HEK293 (cell line): ENCODE measurements at regions of chr1 and their contacts with region 1.

Region 1: DNA sequence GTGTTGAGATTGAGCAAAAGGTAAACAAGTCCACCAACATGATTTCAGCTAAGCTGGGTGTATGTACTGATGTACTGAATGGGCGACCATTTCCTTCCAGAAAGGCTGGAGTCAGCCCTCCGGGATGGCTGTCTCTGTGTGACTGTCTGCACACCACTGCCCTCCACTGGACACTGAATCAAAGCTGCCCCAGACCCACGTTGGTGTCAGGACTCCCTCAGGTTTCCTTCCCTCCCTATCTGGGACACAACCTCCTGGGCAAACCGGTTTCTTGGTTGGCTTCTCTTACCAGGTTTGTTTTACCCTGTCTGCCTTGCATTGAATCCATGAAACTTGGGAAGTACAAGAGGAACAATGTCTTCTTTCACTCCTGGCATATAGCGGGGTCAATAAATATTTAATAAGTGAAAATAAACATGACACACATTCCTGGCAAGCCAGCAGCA is 5.3 kb upstream of the SRP9 start:
- H3K4me3 ChIP-seq: no peak overlapping the region
- H3K27ac ChIP-seq: no peak overlapping the region
- H3K4me1 ChIP-seq: peaks cover 11% of the 10 kb centered on the region
- CTCF ChIP-seq: peak; percentile 97

Region 2: DNA sequence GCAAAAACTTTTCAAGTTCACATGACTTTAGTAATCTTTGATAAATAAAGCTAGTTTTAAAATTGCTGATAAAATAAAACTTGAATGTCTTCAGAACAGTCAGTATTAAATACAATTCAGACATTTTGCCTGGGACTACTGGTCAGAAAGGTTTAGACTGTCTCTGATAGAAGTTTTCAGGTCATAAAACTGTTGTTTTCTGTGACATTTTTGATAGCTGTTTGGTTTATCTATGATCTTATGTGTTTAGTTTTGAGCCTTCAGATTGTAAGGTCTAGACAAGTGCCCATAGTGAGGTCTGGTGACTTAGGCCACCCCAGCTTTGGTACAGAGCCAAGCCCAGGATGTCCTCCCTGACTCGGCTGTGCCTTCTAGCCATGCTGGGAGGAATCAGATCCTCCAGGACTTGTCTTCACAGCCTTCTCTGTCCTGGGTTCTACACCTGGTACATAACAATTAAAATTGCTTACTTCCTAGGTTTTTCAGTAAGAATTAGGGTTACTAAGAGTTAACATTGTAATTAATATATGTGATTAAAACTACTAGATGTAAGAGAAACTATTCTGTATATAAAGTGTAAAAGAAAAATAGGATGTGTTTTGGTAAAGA is 858.0 kb before region 1 on chr1:
- CTCF ChIA-PET with region 1: no interaction called
- POLR2A ChIA-PET with region 1: no interaction called
- H3K4me3 ChIP-seq: no peak overlapping the region
- H3K27ac ChIP-seq: no peak overlapping the region
- H3K4me1 ChIP-seq: no peaks in the 10 kb centered on the region
- CTCF ChIP-seq: no peak

Region 3: DNA sequence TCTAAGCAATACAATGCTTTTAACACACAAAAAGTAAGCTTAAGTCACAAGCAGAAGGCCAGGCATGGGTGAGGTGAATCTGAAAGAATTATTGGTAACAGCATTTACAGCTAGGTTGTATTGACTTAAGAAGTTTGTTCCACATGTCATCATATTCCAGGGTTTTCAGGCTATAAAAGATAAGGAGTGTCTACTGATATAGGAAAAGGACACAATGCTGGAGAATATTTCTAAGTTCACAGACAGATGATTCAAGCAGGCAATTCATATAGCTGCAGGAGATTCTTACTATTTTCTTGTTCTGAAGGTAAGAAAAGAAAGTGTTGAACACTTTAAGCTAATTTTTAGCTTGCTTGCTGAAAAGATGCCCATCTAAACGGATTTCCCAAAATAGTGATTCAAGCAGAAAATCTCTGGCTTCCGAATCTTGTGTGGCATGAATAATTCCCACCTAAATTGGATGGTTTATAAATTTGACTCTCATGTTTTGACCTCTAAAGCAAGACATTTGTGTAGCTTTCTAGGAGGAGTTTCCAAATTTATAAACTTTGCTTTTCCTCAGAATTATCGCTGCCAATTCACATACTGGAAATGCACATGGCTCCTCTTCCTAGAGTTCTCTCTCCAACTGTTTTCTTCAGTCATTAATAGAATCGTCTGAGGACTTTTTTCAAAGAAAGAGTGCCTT is 248.9 kb before region 1 on chr1:
- CTCF ChIA-PET with region 1: interaction called, 10 read pairs
- POLR2A ChIA-PET with region 1: no interaction called
- H3K4me3 ChIP-seq: no peak overlapping the region
- H3K27ac ChIP-seq: no peak overlapping the region
- H3K4me1 ChIP-seq: peaks cover 13% of the 10 kb centered on the region; the same call in 1 of the 2 replicates
- CTCF ChIP-seq: no peak

Region 4: GRCh38 chr1:225567590-225568194 is 204.7 kb before region 1 on chr1:
- CTCF ChIA-PET with region 1: interaction called, 12 read pairs
- POLR2A ChIA-PET with region 1: no interaction called
- H3K4me3 ChIP-seq: no peak overlapping the region
- H3K27ac ChIP-seq: no peak overlapping the region
- H3K4me1 ChIP-seq: peaks cover 15% of the 10 kb centered on the region
- CTCF ChIP-seq: no peak

Region 5: DNA sequence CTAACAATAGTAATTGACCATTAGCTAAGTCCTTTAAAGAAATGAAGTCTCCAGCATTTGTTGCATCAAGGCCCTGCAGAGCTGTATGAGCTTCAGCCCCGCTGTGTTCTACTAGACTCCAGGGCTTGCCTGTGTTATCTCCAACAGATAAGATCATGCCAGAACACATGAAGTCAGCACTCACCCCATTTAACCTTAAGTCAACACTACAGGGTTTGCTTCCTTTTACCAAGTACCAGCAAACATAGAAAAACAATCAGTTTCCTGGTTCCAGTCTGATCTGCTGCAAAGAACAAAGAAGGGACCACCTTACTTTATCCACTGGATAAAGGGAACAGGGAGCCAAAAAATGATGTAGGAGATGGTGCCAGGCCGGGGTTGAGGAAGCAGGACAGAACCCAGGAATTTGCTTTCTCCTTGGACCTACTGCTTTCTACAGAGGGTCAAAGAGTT is 78.2 kb before region 1 on chr1:
- CTCF ChIA-PET with region 1: interaction called, 17 read pairs
- POLR2A ChIA-PET with region 1: interaction called, 9 read pairs
- H3K4me3 ChIP-seq: no peak overlapping the region
- H3K27ac ChIP-seq: peak overlapping the region; percentile 42
- H3K4me1 ChIP-seq: peaks cover 17% of the 10 kb centered on the region
- CTCF ChIP-seq: no peak

Region 6: DNA sequence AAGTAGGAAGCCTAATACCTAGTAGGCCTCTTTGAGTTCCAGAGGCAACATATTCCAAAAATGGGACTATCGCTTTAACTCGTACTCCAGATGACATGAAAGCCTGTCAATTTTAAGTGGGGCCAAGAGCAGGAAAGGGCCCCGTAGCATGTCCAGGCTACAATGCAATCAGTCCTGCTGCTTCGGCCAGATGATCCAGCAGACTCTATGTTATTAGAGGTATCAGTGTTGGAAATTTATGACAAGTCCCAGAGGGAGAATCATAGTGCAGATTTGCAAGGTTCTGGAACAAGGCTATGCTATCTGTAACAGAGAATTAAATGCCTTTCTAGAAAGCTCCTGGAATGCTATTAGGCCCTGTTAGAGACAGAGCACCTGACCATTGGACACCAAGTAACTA is 51.4 kb before region 1 on chr1:
- CTCF ChIA-PET with region 1: interaction called, 14 read pairs
- POLR2A ChIA-PET with region 1: interaction called, 5 read pairs
- H3K4me3 ChIP-seq: no peak overlapping the region
- H3K27ac ChIP-seq: no peak overlapping the region
- H3K4me1 ChIP-seq: no peaks in the 10 kb centered on the region
- CTCF ChIP-seq: no peak

Region 7: DNA sequence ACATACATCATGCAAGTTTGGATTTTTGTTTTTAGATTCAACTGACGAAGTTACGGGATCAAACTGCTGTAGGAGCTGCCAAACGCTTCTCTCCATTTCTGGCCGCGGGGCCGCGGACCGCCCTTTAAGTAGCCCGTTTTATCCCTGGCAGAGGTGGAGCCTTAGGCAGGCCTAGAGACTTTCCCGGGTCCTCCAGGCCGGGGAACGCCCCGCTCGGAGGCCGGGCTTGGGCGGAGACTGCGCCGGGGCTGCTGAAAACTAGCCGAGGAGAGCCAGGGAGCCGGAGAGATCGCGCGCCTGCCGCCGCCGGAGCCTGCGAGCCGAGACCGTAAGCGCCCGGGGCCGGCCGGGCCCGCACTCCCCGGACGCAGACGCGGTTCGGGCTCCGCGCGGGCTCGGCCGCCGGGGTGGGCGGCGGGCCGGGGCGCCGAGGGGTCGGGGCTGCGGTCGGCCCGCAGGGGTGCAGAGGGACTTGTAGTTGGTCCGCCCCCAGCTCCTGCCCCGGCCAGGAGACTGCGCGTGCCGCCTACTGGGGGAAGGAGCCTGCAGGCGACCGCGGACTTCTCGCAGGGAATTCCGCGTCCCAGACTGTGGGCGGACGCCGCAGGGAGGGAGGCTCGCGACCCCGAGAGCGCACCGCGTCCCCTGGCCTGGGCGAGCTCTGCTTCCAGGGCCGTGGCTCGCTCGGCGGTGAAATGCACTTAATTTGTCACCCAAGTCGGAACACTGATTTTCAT is 37.7 kb after region 1 on chr1 and contains the start of gene EPHX1:
- CTCF ChIA-PET with region 1: interaction called, 22 read pairs
- POLR2A ChIA-PET with region 1: interaction called, 46 read pairs
- H3K4me3 ChIP-seq: peak within 1 kb of the TSS; percentile 64
- H3K27ac ChIP-seq: peak within 1 kb of the TSS; percentile 61
- H3K4me1 ChIP-seq: peaks cover 20% of the 10 kb centered on the region
- CTCF ChIP-seq: peak; percentile 88

Region 8: DNA sequence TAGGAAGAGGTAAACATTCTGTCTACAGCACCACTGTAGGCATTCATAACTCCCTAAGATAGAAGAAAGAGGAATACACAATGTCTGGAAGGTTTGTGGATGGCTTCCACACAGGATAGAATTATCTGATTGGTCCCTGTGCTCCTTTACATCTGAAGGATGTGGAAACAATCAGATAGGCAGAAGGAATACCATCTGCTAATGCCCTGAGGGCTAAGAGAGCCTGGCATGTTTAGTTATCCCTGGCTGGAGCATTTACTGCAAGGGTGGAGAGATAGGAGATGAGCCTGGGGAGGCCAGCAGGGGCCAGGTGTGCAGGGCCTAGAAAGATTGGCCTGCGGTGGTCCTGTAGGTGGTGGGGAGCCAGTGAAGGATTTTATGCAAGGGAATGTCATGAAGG is 422.8 kb after region 1 on chr1:
- CTCF ChIA-PET with region 1: no interaction called
- POLR2A ChIA-PET with region 1: no interaction called
- H3K4me3 ChIP-seq: no peak overlapping the region
- H3K27ac ChIP-seq: no peak overlapping the region
- H3K4me1 ChIP-seq: peaks cover 5% of the 10 kb centered on the region; the same call in 1 of the 2 replicates
- CTCF ChIP-seq: no peak